ENCODE measurements at regions of chr4 and their contacts with region 1.

Region 1: GRCh38 chr4:36285784-36286480 is 4.5 kb downstream of the DTHD1 start:
- DNase-seq: peak; percentile 72
- ATAC-seq: peak; percentile 94
- H3K4me3 Mint-ChIP-seq: peak overlapping the region; percentile 42
- H3K27ac Mint-ChIP-seq: peak overlapping the region; percentile 82
- H3K4me1 Mint-ChIP-seq: peaks cover 55% of the 10 kb centered on the region
- H3K27me3 Mint-ChIP-seq: peaks cover 3% of the 10 kb centered on the region

Region 2: DNA sequence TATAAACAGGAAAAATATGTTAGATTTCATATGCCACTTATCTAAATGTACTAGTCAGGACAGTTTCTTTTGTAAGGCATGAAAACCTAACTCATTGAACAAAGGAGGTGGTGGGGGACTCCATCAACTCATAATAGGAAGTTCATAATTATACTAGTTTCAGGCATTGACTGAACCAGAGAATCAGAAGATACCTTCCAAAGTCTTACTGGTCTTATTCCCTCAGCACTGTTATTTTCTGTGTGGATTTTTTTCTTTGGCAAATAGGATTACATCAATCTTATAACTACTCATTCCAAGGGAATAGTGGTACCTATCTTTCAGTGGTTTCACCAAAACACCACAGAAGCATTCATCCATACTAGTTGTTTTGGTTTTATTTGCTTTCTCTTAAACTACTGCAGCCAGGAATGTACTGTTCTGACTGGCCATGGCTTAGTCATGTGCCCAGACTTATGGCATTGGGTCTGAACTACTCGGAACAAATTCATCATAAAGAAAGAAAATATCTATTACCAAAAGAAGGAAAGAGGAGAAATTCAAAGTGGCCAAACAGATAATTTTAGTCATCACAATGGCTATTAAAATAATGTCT is 315.5 kb before region 1 on chr4:
- CTCF ChIA-PET with region 1: no interaction called
- POLR2A ChIA-PET with region 1: no interaction called
- intact Hi-C with region 1: loop called in 1 of 2 experiments (anchors 1 kb)
- DNase-seq: peak; percentile 42
- ATAC-seq: peak; percentile 81
- H3K4me3 Mint-ChIP-seq: no peak overlapping the region
- H3K27ac Mint-ChIP-seq: no peak overlapping the region
- H3K4me1 Mint-ChIP-seq: peaks cover 10% of the 10 kb centered on the region
- H3K27me3 Mint-ChIP-seq: peaks cover 6% of the 10 kb centered on the region

Region 3: GRCh38 chr4:36208893-36209473 is 76.9 kb before region 1 on chr4:
- CTCF ChIA-PET with region 1: no interaction called
- POLR2A ChIA-PET with region 1: no interaction called
- intact Hi-C with region 1: loop called in 1 of 2 experiments (anchors 1 kb)
- DNase-seq: peak; percentile 51
- ATAC-seq: peak; percentile 72
- H3K4me3 Mint-ChIP-seq: no peak overlapping the region
- H3K27ac Mint-ChIP-seq: peak overlapping the region; percentile 44
- H3K4me1 Mint-ChIP-seq: peaks cover 49% of the 10 kb centered on the region
- H3K27me3 Mint-ChIP-seq: no peaks in the 10 kb centered on the region

Region 4: GRCh38 chr4:36255577-36255976 is 30.4 kb before region 1 on chr4:
- CTCF ChIA-PET with region 1: interaction called, 6 read pairs
- POLR2A ChIA-PET with region 1: interaction called, 8 read pairs
- intact Hi-C with region 1: loop called (anchors 1 kb)
- DNase-seq: peak; percentile 73
- ATAC-seq: peak; percentile 87
- H3K4me3 Mint-ChIP-seq: peak overlapping the region; percentile 50
- H3K27ac Mint-ChIP-seq: peak overlapping the region; percentile 93
- H3K4me1 Mint-ChIP-seq: peaks cover 39% of the 10 kb centered on the region
- H3K27me3 Mint-ChIP-seq: no peaks in the 10 kb centered on the region

Region 5: DNA sequence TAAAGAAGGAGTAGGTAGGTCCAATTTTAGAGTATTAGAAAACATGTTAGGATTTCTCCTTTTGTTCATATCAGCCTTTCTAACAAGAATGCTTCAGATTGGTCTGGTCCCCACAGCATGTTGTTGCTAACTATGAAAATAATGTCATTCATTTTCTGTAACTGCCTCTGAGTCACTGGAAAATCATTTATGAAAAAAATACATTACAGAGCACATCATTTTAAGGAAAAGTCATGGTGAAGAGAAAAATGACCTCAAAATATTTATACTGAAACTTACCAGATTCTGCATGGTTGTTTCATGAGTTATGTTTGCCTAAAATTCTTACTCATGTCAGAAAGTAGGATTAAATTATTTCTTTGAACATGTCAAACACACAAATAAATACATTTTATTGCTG is 30.7 kb after region 1 on chr4:
- CTCF ChIA-PET with region 1: interaction called, 3 read pairs
- POLR2A ChIA-PET with region 1: interaction called, 3 read pairs
- intact Hi-C with region 1: loop called (anchors 1 kb)
- DNase-seq: peak; percentile 33
- ATAC-seq: peak; percentile 81
- H3K4me3 Mint-ChIP-seq: no peak overlapping the region
- H3K27ac Mint-ChIP-seq: no peak overlapping the region
- H3K4me1 Mint-ChIP-seq: peaks cover 49% of the 10 kb centered on the region
- H3K27me3 Mint-ChIP-seq: peaks cover 2% of the 10 kb centered on the region

Region 6: GRCh38 chr4:36351082-36351666 is 65.2 kb after region 1 on chr4:
- CTCF ChIA-PET with region 1: no interaction called
- POLR2A ChIA-PET with region 1: interaction called, 5 read pairs
- intact Hi-C with region 1: loop called (anchors 1 kb)
- DNase-seq: peak; percentile 87
- ATAC-seq: peak; percentile 58
- H3K4me3 Mint-ChIP-seq: no peak overlapping the region
- H3K27ac Mint-ChIP-seq: no peak overlapping the region
- H3K4me1 Mint-ChIP-seq: peaks cover 23% of the 10 kb centered on the region
- H3K27me3 Mint-ChIP-seq: peaks cover 3% of the 10 kb centered on the region

Region 7: DNA sequence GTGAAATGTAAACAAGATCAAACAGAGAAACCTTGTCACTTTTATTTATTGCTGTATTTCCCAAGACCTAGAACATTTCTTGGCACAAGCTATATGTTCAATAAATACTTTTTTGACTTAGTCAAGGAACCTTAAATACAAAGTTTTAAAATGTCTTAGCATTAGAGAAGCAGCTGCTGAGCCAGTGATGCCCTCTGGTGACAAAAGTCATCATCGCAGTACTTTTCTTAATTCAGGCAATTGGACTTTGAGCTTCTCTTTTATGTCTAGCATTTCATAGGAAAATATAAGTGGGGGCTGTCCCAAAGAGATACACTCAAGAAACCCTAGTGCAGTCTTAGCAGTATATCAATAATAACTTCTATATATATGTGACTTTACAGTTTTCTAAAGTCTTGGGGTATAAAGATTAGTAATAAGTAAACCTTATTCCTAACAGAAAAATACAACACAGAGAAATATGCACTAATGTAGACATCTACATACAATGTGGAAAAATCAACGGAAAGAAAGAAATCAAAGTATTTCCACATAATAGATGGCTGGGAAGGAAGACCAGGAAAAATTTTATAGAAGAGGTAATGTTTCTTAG is 113.9 kb after region 1 on chr4:
- CTCF ChIA-PET with region 1: interaction called, 10 read pairs
- POLR2A ChIA-PET with region 1: interaction called, 5 read pairs
- intact Hi-C with region 1: no loop called
- DNase-seq: peak; percentile 69
- ATAC-seq: peak; percentile 77
- H3K4me3 Mint-ChIP-seq: no peak overlapping the region
- H3K27ac Mint-ChIP-seq: no peak overlapping the region
- H3K4me1 Mint-ChIP-seq: peaks cover 26% of the 10 kb centered on the region
- H3K27me3 Mint-ChIP-seq: no peaks in the 10 kb centered on the region

Region 8: DNA sequence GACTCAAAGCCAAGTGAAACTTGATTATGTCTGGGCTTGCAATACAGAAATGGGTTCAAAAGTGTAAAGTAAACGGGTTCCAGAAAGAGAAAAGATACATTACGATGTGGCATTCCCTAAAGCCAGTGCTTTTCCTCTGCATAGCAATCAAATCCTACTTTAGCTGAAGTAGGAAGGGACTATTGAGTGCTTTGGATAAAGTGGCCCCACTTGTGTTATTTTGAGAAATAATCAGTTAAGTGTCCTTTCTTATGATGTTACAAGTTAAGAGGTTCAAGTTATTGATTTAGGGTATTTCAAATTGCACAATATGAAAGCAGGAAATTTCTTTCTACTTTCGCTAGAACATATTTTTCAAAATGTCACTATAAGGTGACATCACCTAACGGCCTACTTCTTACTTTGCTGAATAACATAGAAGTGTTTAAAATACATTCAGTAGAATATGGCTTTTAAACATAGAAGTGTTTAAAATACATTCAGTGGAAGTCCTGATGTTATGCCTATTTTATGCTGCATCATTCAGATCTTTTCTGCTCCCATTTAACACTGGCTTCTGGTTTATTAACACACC is 230.7 kb after region 1 on chr4:
- CTCF ChIA-PET with region 1: no interaction called
- POLR2A ChIA-PET with region 1: no interaction called
- intact Hi-C with region 1: no loop called
- DNase-seq: no peak
- ATAC-seq: no peak
- H3K4me3 Mint-ChIP-seq: no peak overlapping the region
- H3K27ac Mint-ChIP-seq: no peak overlapping the region
- H3K4me1 Mint-ChIP-seq: no peaks in the 10 kb centered on the region
- H3K27me3 Mint-ChIP-seq: peaks cover 4% of the 10 kb centered on the region

Region 9: DNA sequence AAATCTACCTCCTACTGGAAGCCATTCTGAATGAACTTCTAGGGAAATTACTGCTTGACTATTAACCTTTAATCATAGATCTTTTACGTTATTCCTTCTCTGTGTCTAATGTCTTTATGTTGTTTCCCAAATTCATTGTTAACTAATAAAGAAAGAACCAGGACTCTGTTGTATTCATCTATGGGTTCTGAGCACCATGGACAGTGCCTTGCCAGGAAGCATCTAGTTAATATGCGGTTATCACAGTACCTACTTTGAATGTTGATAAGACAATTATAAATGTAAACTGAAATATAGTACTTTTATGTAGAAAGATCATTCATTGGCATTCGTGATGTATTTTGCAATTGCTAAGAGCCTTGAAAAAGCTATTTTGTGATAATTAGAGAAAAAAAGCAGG is 982.4 kb after region 1 on chr4:
- CTCF ChIA-PET with region 1: no interaction called
- POLR2A ChIA-PET with region 1: no interaction called
- intact Hi-C with region 1: no loop called
- DNase-seq: no peak
- ATAC-seq: no peak
- H3K4me3 Mint-ChIP-seq: no peak overlapping the region
- H3K27ac Mint-ChIP-seq: no peak overlapping the region
- H3K4me1 Mint-ChIP-seq: no peaks in the 10 kb centered on the region
- H3K27me3 Mint-ChIP-seq: peaks cover 12% of the 10 kb centered on the region

Region 10: DNA sequence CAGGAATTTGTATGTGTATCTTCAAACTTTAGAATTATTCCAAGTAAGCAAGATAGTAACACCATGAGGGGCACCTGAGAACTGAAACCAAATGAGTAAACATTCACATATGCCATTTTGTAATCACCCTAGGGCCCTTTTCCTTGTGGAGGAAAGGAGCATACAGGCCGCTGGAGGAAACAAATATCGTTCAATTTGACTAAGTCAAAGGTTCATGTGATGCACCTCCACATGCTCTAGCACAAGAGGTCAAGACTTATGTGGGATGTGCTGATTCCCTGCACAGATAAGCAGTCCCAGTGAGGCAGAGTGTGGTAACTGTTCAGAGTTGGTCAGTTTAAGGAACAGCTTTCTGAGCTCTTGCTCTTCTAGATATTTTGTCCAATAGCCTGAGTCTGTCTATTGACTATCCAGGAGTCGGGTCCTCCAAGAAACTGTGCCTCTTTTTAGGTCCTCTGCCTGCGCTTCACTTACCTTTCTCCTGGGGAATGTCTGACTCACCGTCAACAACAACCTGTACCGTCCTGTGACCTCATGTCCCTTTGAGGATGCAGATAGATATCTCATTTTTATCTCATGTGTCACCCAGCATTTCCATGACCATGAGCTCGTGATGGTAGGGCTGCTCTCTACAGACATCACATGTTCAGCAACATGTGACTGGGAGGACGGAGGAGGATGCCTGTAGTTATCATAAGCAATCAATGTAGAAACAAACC is 1155.5 kb after region 1 on chr4:
- CTCF ChIA-PET with region 1: no interaction called
- POLR2A ChIA-PET with region 1: no interaction called
- intact Hi-C with region 1: no loop called
- DNase-seq: no peak
- ATAC-seq: no peak
- H3K4me3 Mint-ChIP-seq: no peak overlapping the region
- H3K27ac Mint-ChIP-seq: no peak overlapping the region
- H3K4me1 Mint-ChIP-seq: no peaks in the 10 kb centered on the region
- H3K27me3 Mint-ChIP-seq: peaks cover 17% of the 10 kb centered on the region

Measured in activated CD4-positive, alpha-beta T cell treated with anti-CD3 and anti-CD28 coated beads for 36 hours (primary cell).